IMR-90 (cell line): ENCODE measurements at regions of chr2 and their contacts with region 1.

Region 1: DNA sequence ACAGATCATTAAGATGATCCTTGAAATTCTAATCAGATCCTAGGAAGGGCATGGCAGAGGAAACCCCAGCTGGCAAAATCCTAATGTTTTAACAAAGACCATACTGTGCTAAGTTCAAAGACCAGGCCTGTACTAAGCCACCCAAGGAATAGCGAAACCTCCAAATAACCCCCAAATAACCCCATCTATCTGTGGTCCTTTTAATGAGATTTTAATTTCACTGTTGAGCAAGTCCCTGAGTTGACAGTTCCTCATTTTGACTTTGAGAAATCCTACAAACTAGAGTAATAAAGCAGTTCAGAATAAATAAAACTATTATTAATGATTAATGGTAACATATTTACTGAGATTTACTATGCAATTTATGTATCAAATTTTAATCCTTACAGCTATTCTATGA is 259.8 kb downstream of the STK39 start:
- DNase-seq: no peak
- ATAC-seq: no peak
- H3K4me3 ChIP-seq: no peak overlapping the region
- H3K27ac ChIP-seq: peak overlapping the region; percentile 9; the same call in 1 of the 2 replicates
- H3K4me1 ChIP-seq: peaks cover 25% of the 10 kb centered on the region
- H3K27me3 ChIP-seq: no peaks in the 10 kb centered on the region
- CTCF ChIP-seq: no peak
- POLR2A ChIP-seq: no peak
- RAD21 ChIP-seq: no peak

Region 2: DNA sequence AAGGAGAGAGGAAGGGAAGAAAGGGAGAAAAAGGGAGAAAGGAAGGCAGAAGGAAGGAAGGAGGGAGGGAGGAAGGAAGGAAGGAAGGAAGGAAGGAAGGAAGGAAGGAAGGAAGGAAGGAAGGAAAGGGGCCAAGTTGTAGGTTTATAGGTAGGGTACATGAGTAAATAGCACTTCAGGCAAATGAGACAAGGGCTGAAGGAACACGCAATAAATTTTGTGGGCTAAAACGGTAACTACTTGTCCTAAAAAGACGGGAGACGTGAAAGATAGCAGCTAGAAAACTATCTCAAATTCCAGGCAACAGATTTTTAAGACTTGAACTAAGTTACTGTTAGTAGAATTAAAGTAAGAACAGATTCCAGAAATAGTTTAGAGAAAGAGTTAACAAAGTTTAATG is 1228.6 kb before region 1 on chr2:
- CTCF ChIA-PET with region 1: no interaction called
- POLR2A ChIA-PET with region 1: no interaction called
- dilution Hi-C with region 1: no loop called
- in situ Hi-C with region 1: no loop called
- intact Hi-C with region 1: no loop called
- DNase-seq: no peak
- ATAC-seq: no peak
- H3K4me3 ChIP-seq: no peak overlapping the region
- H3K27ac ChIP-seq: no peak overlapping the region
- H3K4me1 ChIP-seq: no peaks in the 10 kb centered on the region
- H3K27me3 ChIP-seq: no peaks in the 10 kb centered on the region
- CTCF ChIP-seq: no peak
- POLR2A ChIP-seq: no peak
- RAD21 ChIP-seq: no peak

Region 3: DNA sequence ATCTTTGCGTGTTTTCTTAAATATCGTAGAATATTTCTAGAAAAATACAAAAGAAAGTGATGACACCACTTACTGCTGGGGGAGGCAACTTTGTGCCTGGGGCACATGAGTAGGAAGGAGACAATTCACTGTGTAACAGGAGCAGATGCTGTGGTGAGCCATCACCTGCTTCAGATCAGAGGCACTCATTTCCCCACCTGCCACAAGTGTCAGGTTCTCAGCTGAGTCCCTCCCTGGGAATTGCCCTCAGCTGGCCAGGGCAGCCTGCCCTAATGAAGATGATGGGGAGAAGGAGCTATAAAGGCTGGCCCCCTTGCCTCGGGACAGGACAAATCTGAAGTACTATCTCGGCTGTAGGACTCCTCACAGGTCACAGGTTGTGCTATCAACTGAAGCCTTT is 63.0 kb before region 1 on chr2:
- CTCF ChIA-PET with region 1: no interaction called
- POLR2A ChIA-PET with region 1: no interaction called
- dilution Hi-C with region 1: no loop called
- in situ Hi-C with region 1: no loop called
- intact Hi-C with region 1: no loop called
- DNase-seq: no peak
- ATAC-seq: no peak
- H3K4me3 ChIP-seq: no peak overlapping the region
- H3K27ac ChIP-seq: no peak overlapping the region
- H3K4me1 ChIP-seq: no peaks in the 10 kb centered on the region
- H3K27me3 ChIP-seq: peaks cover 2% of the 10 kb centered on the region; the same call in 1 of the 2 replicates
- CTCF ChIP-seq: no peak
- POLR2A ChIP-seq: no peak
- RAD21 ChIP-seq: no peak

Region 4: GRCh38 chr2:168030862-168031624 is 43.5 kb after region 1 on chr2:
- CTCF ChIA-PET with region 1: no interaction called
- POLR2A ChIA-PET with region 1: no interaction called
- dilution Hi-C with region 1: no loop called
- in situ Hi-C with region 1: no loop called
- intact Hi-C with region 1: loop called (anchors 5 kb)
- DNase-seq: peak; percentile 95
- ATAC-seq: peak; percentile 94
- H3K4me3 ChIP-seq: no peak overlapping the region
- H3K27ac ChIP-seq: peak overlapping the region; percentile 99
- H3K4me1 ChIP-seq: peaks cover 15% of the 10 kb centered on the region
- H3K27me3 ChIP-seq: no peaks in the 10 kb centered on the region
- CTCF ChIP-seq: no peak
- POLR2A ChIP-seq: no peak
- RAD21 ChIP-seq: peak; percentile 1; the same call in 1 of the 2 replicates